ENCODE measurements at regions of chr22 and their contacts with region 1.

Region 1: GRCh38 chr22:38927033-38927781 is 30.2 kb upstream of the APOBEC3A start:
- DNase-seq: peak in 1 of 2 experiments; percentile 89
- H3K4me3 ChIP-seq: no peak overlapping the region
- H3K27ac ChIP-seq: no peak overlapping the region
- H3K4me1 ChIP-seq: peaks cover 39% of the 10 kb centered on the region
- H3K27me3 ChIP-seq: no peaks in the 10 kb centered on the region
- CTCF ChIP-seq: peak; percentile 50

Region 2: GRCh38 chr22:38881464-38881871 is 45.7 kb before region 1 on chr22:
- CTCF ChIA-PET with region 1: interaction called, 9 read pairs
- POLR2A ChIA-PET with region 1: interaction called, 5 read pairs
- intact Hi-C with region 1: loop called (anchors 1 kb)
- DNase-seq: no peak
- H3K4me3 ChIP-seq: no peak overlapping the region
- H3K27ac ChIP-seq: no peak overlapping the region
- H3K4me1 ChIP-seq: peaks cover 26% of the 10 kb centered on the region
- H3K27me3 ChIP-seq: no peaks in the 10 kb centered on the region
- CTCF ChIP-seq: no peak

Region 3: DNA sequence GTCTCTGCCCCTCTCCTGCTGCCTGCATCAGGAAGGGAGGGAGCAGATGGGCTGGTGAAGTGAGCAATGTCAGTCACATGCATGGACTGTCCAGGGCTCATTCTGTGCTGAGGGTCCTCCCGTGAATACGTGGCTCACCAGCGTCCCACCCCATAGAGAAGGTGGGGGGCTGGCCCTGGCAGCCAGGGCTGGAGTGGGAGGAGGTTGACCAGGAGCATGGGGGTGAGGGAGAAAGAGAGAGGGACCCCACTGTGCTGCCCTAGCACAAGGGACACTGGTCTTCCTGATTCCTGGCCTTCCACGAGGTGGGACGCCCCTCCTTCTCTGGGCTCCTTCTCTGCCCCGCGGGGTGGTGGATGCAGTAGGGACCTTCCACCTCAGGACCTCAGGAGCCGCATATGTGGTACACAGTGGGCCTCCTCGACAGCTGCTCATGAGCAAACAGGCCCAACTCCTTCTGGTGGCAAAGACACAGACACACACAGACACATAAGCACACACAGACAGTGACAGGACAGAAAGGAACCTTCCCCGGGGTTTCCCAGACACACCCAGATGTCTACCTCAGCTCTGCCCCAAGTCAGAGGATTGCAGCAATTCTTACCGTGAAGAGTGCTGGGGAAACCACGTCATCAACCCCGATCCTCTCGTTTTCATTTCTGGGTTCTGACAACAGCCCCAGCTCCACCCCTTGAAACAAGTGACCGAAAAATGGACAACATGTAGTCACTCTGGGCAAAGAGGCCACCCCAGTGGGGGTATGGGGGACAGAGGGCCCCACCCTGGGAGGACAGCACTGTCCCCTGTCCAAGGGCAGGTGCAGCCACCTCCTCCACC is 26.6 kb after region 1 on chr22:
- CTCF ChIA-PET with region 1: interaction called, 16 read pairs
- POLR2A ChIA-PET with region 1: no interaction called
- intact Hi-C with region 1: no loop called
- DNase-seq: peak; percentile 48 to 76
- H3K4me3 ChIP-seq: no peak overlapping the region
- H3K27ac ChIP-seq: no peak overlapping the region
- H3K4me1 ChIP-seq: peaks cover 26% of the 10 kb centered on the region
- H3K27me3 ChIP-seq: no peaks in the 10 kb centered on the region
- CTCF ChIP-seq: no peak

Region 4: GRCh38 chr22:39003165-39003638 is 76.0 kb after region 1 on chr22:
- CTCF ChIA-PET with region 1: interaction called, 3 read pairs
- POLR2A ChIA-PET with region 1: no interaction called
- intact Hi-C with region 1: loop called (anchors 1 kb)
- DNase-seq: peak; percentile 89 to 94
- H3K4me3 ChIP-seq: no peak overlapping the region
- H3K27ac ChIP-seq: peak overlapping the region; percentile 20; the same call in 1 of the 2 replicates
- H3K4me1 ChIP-seq: peaks cover 11% of the 10 kb centered on the region
- H3K27me3 ChIP-seq: no peaks in the 10 kb centered on the region
- CTCF ChIP-seq: peak; percentile 95

Region 5: GRCh38 chr22:39174498-39175120 is 247.4 kb after region 1 on chr22:
- CTCF ChIA-PET with region 1: no interaction called
- POLR2A ChIA-PET with region 1: no interaction called
- intact Hi-C with region 1: no loop called
- DNase-seq: peak; percentile 92 to 94
- H3K4me3 ChIP-seq: peak overlapping the region; percentile 20; the same call in 1 of the 2 replicates
- H3K27ac ChIP-seq: peak overlapping the region; percentile 72
- H3K4me1 ChIP-seq: peaks cover 60% of the 10 kb centered on the region
- H3K27me3 ChIP-seq: no peaks in the 10 kb centered on the region
- CTCF ChIP-seq: no peak